ENCODE measurements at regions of chr5 and their contacts with region 1.

Region 1: DNA sequence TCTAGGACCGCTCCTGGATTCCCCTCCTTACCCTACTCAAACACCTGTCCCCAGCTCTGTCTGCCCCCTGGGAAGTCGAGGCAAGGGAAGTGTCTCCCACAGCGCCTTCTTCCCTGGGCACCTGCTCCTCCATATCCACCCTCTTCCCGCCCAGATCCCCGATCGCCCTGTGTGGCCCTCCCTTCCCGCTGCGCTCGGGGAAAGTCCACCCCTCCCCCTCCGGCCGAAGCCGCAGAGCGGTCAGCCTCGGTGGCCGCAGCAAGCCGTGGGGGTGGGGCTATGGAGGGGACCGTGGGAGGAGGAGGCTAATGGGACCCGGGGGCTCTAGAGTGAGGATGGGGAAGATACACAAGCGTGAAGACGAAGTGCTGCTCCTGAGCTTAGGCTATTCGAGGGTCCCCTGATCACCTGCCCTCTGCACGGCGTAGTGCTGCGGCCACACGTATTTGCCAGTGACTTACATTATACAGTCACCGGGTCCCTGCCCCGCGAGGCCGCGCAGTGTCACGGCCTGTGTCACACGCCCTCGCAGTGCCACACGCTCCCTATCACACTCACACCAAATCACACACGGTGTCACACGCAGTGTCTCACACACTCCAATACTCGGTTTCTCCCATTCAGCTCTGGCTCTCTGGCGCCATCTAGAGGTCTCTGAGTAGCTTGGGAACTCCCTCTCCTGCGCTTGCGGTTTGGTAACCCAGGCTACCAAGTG is 658 bp upstream of the PCDH1 start:
- DNase-seq: peak; percentile 93 to 96
- H3K4me3 ChIP-seq: peak overlapping the region; percentile 68
- H3K27ac ChIP-seq: peak overlapping the region; percentile 82
- H3K4me1 ChIP-seq: peaks cover 43% of the 10 kb centered on the region
- H3K27me3 ChIP-seq: no peaks in the 10 kb centered on the region
- CTCF ChIP-seq: peak; percentile 96

Region 2: DNA sequence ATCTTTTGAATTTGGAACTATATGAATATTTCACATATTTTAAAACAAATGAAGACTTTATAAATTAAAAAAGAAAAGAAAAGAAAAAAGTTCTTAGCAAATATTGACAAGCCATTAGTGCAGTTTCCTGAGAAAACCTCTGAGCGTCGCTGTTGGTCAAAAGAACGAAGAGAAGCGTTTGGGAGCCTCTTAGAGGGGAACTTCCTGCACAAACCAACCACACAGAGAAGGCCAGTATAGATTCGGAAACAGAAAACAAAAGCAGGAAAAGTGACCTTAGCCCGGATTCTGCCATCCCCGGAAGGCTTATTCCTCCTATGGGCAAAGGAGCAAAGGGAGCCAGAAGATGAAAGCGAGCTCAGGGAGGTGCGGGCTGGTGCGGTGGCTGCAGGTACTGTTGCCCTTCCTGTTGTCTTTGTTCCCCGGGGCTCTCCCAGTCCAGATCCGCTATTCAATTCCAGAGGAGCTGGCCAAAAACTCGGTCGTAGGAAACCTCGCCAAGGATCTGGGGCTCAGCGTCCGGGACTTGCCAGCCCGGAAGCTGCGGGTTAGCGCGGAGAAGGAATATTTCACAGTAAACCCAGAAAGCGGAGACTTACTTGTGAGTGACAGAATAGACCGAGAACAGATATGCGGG is 519.0 kb before region 1 on chr5 and contains the start of gene PCDHGB2:
- CTCF ChIA-PET with region 1: no interaction called
- POLR2A ChIA-PET with region 1: no interaction called
- intact Hi-C with region 1: no loop called
- DNase-seq: no peak
- H3K4me3 ChIP-seq: no peak within 1 kb of the TSS; the same call in 1 of the 2 replicates
- H3K27ac ChIP-seq: no peak within 1 kb of the TSS
- H3K4me1 ChIP-seq: no peaks in the 10 kb centered on the region
- H3K27me3 ChIP-seq: peaks cover 14% of the 10 kb centered on the region
- CTCF ChIP-seq: peak; percentile 63
- total RNA-seq, gene PCDHGB2: 0.28 and 0.33 TPM in 2 replicates

Region 3: GRCh38 chr5:141465351-141465750 is 413.5 kb before region 1 on chr5:
- CTCF ChIA-PET with region 1: no interaction called
- POLR2A ChIA-PET with region 1: no interaction called
- intact Hi-C with region 1: no loop called
- DNase-seq: no peak
- H3K4me3 ChIP-seq: no peak overlapping the region
- H3K27ac ChIP-seq: no peak overlapping the region
- H3K4me1 ChIP-seq: no peaks in the 10 kb centered on the region
- H3K27me3 ChIP-seq: no peaks in the 10 kb centered on the region
- CTCF ChIP-seq: no peak

Region 4: GRCh38 chr5:141564216-141564692 is 314.6 kb before region 1 on chr5:
- CTCF ChIA-PET with region 1: no interaction called
- POLR2A ChIA-PET with region 1: interaction called, 12 read pairs
- intact Hi-C with region 1: no loop called
- DNase-seq: peak; percentile 41 to 89
- H3K4me3 ChIP-seq: no peak overlapping the region
- H3K27ac ChIP-seq: peak overlapping the region; percentile 85
- H3K4me1 ChIP-seq: peaks cover 5% of the 10 kb centered on the region; the same call in 1 of the 2 replicates
- H3K27me3 ChIP-seq: no peaks in the 10 kb centered on the region
- CTCF ChIP-seq: peak; percentile 97

Region 5: DNA sequence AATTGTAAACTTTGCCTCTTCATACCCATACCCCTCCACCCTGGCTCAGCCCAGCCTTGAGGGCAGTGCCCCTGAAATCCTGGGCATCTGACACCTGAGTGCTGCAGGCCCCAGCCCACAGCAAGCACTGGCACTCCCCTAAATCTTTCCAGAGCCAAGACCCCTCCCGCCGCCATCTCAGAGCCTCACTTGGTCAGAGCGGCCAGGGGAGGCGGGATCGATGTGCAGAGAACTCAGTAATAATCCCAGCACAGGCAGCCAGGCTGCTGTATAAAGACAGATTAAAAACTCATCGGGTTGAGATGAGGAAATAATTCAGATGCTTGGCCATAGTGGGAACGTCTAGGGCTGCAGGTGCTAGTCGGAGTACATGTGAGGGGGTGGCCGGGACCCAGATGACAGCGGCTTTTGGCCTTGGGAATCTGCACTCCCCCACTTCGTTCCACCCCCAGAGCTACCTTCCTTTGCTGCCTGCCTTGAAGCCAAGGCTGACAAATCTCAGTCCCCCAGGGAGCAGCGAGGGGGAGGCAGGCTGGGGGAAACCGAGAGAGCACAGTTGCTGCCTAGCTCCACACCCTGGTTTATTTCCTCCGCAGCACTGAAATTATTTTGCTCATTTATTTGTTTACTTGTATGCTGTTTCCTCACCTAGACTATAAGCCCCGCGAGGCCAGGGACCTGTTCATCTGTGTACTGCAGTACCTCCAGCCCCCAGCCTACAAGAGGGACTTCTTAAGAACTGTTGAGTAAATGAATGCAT is 177.3 kb before region 1 on chr5:
- CTCF ChIA-PET with region 1: interaction called, 26 read pairs
- POLR2A ChIA-PET with region 1: interaction called, 7 read pairs
- intact Hi-C with region 1: loop called (anchors 1 kb)
- DNase-seq: no peak
- H3K4me3 ChIP-seq: no peak overlapping the region
- H3K27ac ChIP-seq: no peak overlapping the region
- H3K4me1 ChIP-seq: peaks cover 59% of the 10 kb centered on the region
- H3K27me3 ChIP-seq: no peaks in the 10 kb centered on the region
- CTCF ChIP-seq: no peak

Region 6: GRCh38 chr5:141811287-141812155 is 67.3 kb before region 1 on chr5:
- CTCF ChIA-PET with region 1: interaction called, 4 read pairs
- POLR2A ChIA-PET with region 1: no interaction called
- intact Hi-C with region 1: loop called (anchors 1 kb)
- DNase-seq: no peak
- H3K4me3 ChIP-seq: no peak overlapping the region
- H3K27ac ChIP-seq: no peak overlapping the region
- H3K4me1 ChIP-seq: 0 out of 2 replicates have a peak, but pooled peaks cover under 1% of the 10 kb centered on the region
- H3K27me3 ChIP-seq: no peaks in the 10 kb centered on the region
- CTCF ChIP-seq: peak; percentile 84

Region 7: DNA sequence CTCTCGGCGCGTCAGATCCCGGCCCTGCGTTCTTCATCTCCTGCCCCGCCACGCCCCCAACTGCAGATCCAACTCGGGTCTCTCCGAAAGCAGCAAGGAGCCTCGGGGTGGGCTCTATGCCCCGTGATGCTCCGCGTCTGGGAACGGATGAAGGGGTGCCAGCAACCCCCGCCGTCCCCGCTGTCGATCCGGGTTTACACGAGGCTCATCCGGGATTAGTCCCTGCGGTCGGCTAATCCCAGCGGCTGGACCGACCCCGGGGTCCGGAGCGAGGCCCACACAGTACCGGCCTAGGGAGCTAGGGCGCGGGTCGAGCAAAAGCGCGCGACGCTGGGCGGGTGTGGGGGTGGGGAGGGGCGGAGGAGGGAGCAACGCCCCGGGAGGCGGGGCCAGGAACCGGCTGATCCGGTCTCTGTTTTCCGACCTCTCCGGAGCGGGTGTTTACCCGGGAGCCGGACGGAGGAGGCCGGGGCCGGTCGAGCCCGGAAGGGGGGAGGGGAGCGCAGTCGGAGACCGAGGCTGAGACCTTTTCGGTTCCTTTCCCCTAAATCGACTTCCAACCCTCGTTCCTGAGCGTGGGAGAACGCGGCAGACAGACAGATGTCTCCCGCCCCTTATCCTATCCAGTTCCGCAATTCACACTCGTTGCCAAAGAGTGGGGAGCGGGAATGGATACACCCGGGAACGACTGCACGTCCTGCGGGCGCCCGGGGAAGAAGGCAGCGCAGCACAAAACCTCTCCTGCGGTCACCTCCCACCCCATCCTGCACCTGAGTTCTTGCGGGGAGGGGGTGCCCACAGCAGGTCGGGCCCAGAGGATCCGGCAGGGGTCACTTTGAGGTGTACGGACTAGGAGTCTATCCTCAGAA is 29.3 kb before region 1 on chr5:
- CTCF ChIA-PET with region 1: interaction called, 14 read pairs
- POLR2A ChIA-PET with region 1: no interaction called
- intact Hi-C with region 1: loop called (anchors 1 kb)
- DNase-seq: peak; percentile 72 to 89
- H3K4me3 ChIP-seq: peak overlapping the region; percentile 98
- H3K27ac ChIP-seq: peak overlapping the region; percentile 99
- H3K4me1 ChIP-seq: peaks cover 41% of the 10 kb centered on the region
- H3K27me3 ChIP-seq: no peaks in the 10 kb centered on the region
- CTCF ChIP-seq: no peak

Region 8: GRCh38 chr5:141923448-141924352 is 44.8 kb after region 1 on chr5 and contains the start of gene DELE1:
- CTCF ChIA-PET with region 1: no interaction called
- POLR2A ChIA-PET with region 1: interaction called, 4 read pairs
- intact Hi-C with region 1: loop called (anchors 5 kb)
- DNase-seq: peak; percentile 89 to 93
- H3K4me3 ChIP-seq: peak within 1 kb of the TSS; percentile 98
- H3K27ac ChIP-seq: peak within 1 kb of the TSS; percentile 86
- H3K4me1 ChIP-seq: peaks cover 12% of the 10 kb centered on the region
- H3K27me3 ChIP-seq: no peaks in the 10 kb centered on the region
- CTCF ChIP-seq: no peak
- total RNA-seq, gene DELE1: 68.5 and 80.8 TPM in 2 replicates

Region 9: DNA sequence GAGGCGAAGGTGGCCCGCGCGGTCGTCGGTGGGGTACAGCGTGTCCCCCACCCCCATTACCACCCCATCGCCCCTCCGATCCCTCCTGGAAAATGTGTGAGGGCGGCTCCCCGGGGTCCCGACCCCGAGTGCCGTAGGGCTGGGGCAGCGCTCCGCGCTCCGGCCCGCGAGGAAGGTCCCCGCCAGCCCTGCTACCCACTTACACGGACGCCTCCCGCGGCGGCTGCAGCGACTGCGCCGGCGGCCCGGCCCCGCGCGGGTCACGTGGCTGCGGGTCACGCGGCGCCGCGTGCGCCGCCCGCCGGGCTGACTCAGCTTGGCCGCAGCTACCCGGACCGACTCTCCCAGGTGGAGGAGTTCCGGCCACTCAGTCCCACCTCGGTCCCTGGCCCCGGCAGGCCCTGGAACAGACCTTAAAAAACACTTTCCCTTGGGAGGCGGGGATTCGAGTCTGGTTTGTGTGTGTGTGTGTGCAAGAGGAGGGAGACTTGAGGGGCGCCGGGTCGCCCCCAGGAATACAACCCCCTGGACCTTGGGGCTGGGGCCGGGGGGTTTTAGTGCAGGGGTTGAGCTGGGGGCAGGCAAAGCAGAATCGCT is 134.0 kb after region 1 on chr5 and contains the start of gene GNPDA1:
- CTCF ChIA-PET with region 1: no interaction called
- POLR2A ChIA-PET with region 1: interaction called, 15 read pairs
- intact Hi-C with region 1: no loop called
- DNase-seq: peak; percentile 66 to 81
- H3K4me3 ChIP-seq: peak within 1 kb of the TSS; percentile 61
- H3K27ac ChIP-seq: peak within 1 kb of the TSS; percentile 82
- H3K4me1 ChIP-seq: peaks cover 34% of the 10 kb centered on the region
- H3K27me3 ChIP-seq: no peaks in the 10 kb centered on the region
- CTCF ChIP-seq: no peak
- total RNA-seq, gene GNPDA1: 46.5 and 54.1 TPM in 2 replicates

Measured in PC-9 (cell line).